Mammary epithelial cell (primary cell): ENCODE measurements at regions of chr9 and their contacts with region 1.

Region 1: GRCh38 chr9:91422758-91423711 is 597 bp downstream of the NFIL3 start:
- DNase-seq: peak; percentile 66
- H3K4me3 ChIP-seq: peak overlapping the region; percentile 62 to 91 (median 67)
- H3K27ac ChIP-seq: peak overlapping the region; percentile 35
- H3K4me1 ChIP-seq: peaks cover 40% of the 10 kb centered on the region
- H3K27me3 ChIP-seq: no peaks in the 10 kb centered on the region
- CTCF ChIP-seq: peak in 1 of 2 donors; percentile 45

Region 2: DNA sequence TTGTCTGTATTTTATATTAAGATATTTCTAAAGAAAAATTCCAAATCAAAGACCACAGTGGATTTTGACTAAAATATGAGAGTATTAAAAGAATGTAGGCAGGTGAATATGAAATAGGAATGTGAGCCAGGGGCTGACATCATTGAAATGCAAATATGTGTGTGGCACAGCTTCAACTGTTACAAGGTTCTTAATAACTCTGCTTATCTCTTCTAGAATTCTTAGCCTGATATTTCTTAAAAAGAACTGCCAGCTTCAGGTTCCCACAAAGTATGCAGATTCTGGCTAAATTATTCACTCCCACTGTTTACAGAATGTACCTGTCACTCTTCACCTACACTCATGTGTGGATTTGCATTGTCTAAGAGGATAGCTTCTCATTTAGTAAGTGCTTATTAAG is 1054.8 kb before region 1 on chr9:
- CTCF ChIA-PET with region 1: no interaction called
- dilution Hi-C with region 1: no loop called
- in situ Hi-C with region 1: no loop called
- intact Hi-C with region 1: no loop called
- DNase-seq: no peak
- H3K4me3 ChIP-seq: no peak overlapping the region
- H3K27ac ChIP-seq: no peak overlapping the region
- H3K4me1 ChIP-seq: no peaks in the 10 kb centered on the region
- H3K27me3 ChIP-seq: peaks cover 1% of the 10 kb centered on the region
- CTCF ChIP-seq: no peak

Region 3: DNA sequence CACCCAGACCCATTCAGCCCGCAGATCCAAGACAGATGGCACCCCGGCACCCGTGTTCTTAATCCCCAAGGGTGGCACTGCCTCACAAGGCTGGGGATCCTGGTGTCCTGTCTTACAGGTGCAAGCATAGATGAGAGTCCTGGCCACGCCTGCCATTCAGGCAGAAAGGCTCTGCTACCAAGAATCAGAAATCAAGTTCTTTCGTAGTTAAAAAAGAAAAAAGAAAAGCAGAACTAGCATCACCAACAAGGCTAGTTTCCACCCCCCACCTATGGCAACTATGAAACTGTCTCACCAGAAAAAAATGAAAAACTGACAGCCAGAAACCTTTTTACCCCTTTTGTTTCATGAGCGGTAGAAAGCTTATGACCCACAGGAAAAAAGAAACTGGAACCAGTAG is 451.0 kb before region 1 on chr9:
- CTCF ChIA-PET with region 1: no interaction called
- dilution Hi-C with region 1: no loop called
- in situ Hi-C with region 1: no loop called
- intact Hi-C with region 1: loop called (anchors 5 kb)
- DNase-seq: no peak
- H3K4me3 ChIP-seq: no peak overlapping the region
- H3K27ac ChIP-seq: no peak overlapping the region
- H3K4me1 ChIP-seq: peaks cover 44% of the 10 kb centered on the region
- H3K27me3 ChIP-seq: no peaks in the 10 kb centered on the region
- CTCF ChIP-seq: no peak

Region 4: DNA sequence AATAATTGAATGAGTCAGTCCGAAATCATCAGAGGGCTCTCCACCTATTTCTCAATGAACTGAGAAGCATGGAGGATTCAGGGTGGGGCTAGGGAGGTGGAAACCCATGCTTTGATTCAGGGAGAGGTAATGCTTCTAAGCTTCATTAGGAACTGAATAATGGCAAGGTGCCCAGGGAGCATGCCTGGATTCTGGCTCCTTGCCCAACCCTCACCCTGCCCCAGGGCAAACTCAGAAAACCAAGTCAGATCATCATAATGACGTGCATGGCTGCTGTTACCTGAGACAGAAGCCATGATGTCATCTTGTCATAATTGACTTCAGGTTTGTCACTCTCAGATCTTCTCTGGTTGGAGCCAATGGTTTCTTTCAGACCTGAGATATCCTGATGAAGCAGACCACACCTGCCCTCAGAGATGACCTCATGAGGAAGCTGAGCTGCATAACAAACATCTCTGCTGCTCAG is 421.9 kb before region 1 on chr9:
- CTCF ChIA-PET with region 1: interaction called, 4 read pairs
- dilution Hi-C with region 1: no loop called
- in situ Hi-C with region 1: no loop called
- intact Hi-C with region 1: loop called (anchors 1 kb)
- DNase-seq: peak; percentile 100
- H3K4me3 ChIP-seq: no peak overlapping the region
- H3K27ac ChIP-seq: peak overlapping the region; percentile 96
- H3K4me1 ChIP-seq: peaks cover 36% of the 10 kb centered on the region
- H3K27me3 ChIP-seq: no peaks in the 10 kb centered on the region
- CTCF ChIP-seq: no peak

Region 5: DNA sequence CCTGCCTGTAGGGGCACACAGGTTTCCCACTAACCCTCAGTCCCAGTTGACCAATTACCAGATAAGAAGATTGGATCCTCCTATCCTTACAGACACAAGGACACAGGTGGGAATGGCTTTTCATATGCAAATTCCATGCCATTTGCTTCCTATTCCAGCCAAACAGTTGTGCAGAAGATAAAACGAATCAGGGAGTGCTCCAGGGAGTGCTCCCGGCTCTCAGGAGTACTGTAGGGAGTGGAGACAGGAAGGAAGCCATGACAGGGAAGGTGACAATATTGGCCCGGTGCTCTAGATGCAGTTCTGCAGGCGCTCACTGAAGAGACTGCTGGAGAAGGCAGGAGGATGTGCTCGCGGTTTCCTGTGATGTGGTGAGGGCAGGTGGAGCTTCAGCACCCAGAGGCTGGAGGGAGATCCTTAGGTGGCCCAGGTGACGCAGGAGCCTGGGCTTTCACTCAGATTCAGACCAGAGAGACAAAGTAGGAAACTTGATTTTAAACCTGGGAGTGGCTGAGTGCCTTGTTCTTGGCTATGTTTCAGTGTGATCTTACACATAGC is 321.3 kb before region 1 on chr9:
- CTCF ChIA-PET with region 1: interaction called, 11 read pairs
- dilution Hi-C with region 1: no loop called
- in situ Hi-C with region 1: loop called in 1 of 2 experiments (anchors 25 kb)
- intact Hi-C with region 1: loop called (anchors 5 kb)
- DNase-seq: no peak
- H3K4me3 ChIP-seq: no peak overlapping the region
- H3K27ac ChIP-seq: no peak overlapping the region
- H3K4me1 ChIP-seq: peaks cover 15% of the 10 kb centered on the region
- H3K27me3 ChIP-seq: no peaks in the 10 kb centered on the region
- CTCF ChIP-seq: no peak

Region 6: GRCh38 chr9:91164724-91165520 is 258.1 kb before region 1 on chr9:
- CTCF ChIA-PET with region 1: no interaction called
- dilution Hi-C with region 1: no loop called
- in situ Hi-C with region 1: no loop called
- intact Hi-C with region 1: loop called (anchors 10 kb)
- DNase-seq: peak; percentile 93
- H3K4me3 ChIP-seq: no peak overlapping the region
- H3K27ac ChIP-seq: peak overlapping the region; percentile 18
- H3K4me1 ChIP-seq: peaks cover 41% of the 10 kb centered on the region
- H3K27me3 ChIP-seq: no peaks in the 10 kb centered on the region
- CTCF ChIP-seq: no peak

Region 7: DNA sequence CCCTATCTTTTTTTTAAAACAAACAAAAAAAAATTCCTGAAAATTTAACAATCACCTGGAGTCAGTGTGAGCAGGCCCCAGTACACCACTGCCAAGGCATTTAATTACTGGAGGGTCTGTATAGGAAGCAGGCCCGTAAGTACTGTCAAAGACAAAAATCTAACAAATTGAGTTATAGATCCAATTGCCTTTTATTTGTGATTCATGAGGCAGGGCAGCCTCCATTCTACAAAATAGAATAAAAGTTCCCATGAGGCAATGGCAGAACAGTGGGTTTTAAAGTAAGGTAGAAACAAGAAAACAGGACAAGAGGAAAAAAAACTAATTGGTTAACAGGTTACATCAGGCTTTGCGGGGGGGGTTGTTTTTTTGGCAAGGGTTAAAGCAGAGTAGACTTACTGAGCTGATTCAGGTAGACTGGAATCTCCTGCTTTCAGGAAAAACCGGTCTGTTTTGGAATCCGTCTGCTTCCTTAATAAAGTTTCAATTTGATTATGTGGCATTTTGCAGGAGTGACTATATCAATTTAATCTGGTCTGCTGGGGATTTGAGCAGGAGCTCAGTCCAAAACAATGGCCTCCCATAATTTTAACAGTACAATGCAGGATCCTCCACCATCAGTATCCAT is 110.2 kb before region 1 on chr9:
- CTCF ChIA-PET with region 1: interaction called, 20 read pairs
- dilution Hi-C with region 1: no loop called
- in situ Hi-C with region 1: no loop called
- intact Hi-C with region 1: loop called (anchors 5 kb)
- DNase-seq: peak; percentile 80
- H3K4me3 ChIP-seq: no peak overlapping the region
- H3K27ac ChIP-seq: no peak overlapping the region
- H3K4me1 ChIP-seq: peaks cover 7% of the 10 kb centered on the region
- H3K27me3 ChIP-seq: no peaks in the 10 kb centered on the region
- CTCF ChIP-seq: no peak

Region 8: GRCh38 chr9:91395553-91396471 is 27.2 kb before region 1 on chr9:
- CTCF ChIA-PET with region 1: no interaction called
- dilution Hi-C with region 1: no loop called
- in situ Hi-C with region 1: no loop called
- intact Hi-C with region 1: loop called (anchors 2 kb)
- DNase-seq: peak; percentile 85
- H3K4me3 ChIP-seq: no peak overlapping the region
- H3K27ac ChIP-seq: peak overlapping the region; percentile 5
- H3K4me1 ChIP-seq: peaks cover 23% of the 10 kb centered on the region
- H3K27me3 ChIP-seq: peaks cover 2% of the 10 kb centered on the region
- CTCF ChIP-seq: no peak